Activated B cell treated with CpG ODN at 0.5 μM for 24 hours (primary cell): ENCODE measurements at regions of chr18 and their contacts with region 1.

Region 1: DNA sequence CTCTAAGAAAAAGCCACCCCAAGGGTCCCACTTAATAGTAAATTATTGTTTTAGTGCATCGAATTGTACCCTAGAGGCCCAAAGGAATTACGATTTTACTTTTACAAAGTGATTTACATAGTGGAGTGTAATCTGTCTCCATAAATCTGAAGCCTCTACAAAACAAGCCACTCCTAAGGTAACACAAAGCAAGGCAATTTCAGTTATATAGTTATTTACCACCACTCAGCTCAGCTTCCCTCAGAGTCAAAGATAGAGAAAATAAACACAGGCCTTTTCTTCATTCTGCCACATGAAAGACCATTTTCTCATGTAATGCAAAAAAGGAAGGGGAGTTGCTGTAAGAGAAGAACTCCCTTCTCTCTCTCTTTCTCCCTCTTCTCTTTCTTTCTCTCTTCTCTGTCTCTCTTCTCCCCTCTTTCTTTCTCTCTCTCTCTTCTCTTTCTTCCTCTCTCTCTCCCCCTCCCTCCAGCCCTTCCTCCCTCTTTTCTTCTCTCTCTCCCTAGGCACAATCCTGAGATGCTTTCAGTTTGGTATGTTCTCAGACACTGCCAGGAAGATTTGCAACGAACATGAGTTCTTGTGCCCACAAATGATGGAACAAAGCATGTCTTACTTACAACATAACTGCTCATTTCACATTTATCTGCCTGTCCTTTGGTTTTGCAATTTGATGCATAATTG is 264.5 kb downstream of the BCL2 start:
- DNase-seq: no peak
- ATAC-seq: no peak
- H3K4me3 Mint-ChIP-seq: peak overlapping the region; percentile 67
- H3K27ac Mint-ChIP-seq: peak overlapping the region; percentile 42
- H3K4me1 Mint-ChIP-seq: peaks cover 26% of the 10 kb centered on the region
- H3K27me3 Mint-ChIP-seq: no peaks in the 10 kb centered on the region
- CTCF ChIP-seq: no peak

Region 2: GRCh38 chr18:63040788-63041410 is 14.1 kb before region 1 on chr18:
- CTCF ChIA-PET with region 1: no interaction called
- POLR2A ChIA-PET with region 1: interaction called, 3 read pairs
- intact Hi-C with region 1: loop called (anchors 2 kb)
- DNase-seq: no peak
- ATAC-seq: peak; percentile 69
- H3K4me3 Mint-ChIP-seq: peak overlapping the region; percentile 53
- H3K27ac Mint-ChIP-seq: peak overlapping the region; percentile 51
- H3K4me1 Mint-ChIP-seq: peaks cover 29% of the 10 kb centered on the region
- H3K27me3 Mint-ChIP-seq: no peaks in the 10 kb centered on the region
- CTCF ChIP-seq: no peak

Region 3: GRCh38 chr18:63131106-63131958 is 76.3 kb after region 1 on chr18:
- CTCF ChIA-PET with region 1: no interaction called
- POLR2A ChIA-PET with region 1: no interaction called
- intact Hi-C with region 1: no loop called
- DNase-seq: no peak
- ATAC-seq: peak; percentile 65
- H3K4me3 Mint-ChIP-seq: no peak overlapping the region
- H3K27ac Mint-ChIP-seq: peak overlapping the region; percentile 70
- H3K4me1 Mint-ChIP-seq: peaks cover 35% of the 10 kb centered on the region
- H3K27me3 Mint-ChIP-seq: no peaks in the 10 kb centered on the region
- CTCF ChIP-seq: no peak